Naive thymus-derived CD4-positive, alpha-beta T cell (primary cell): ENCODE measurements at regions of chr5 and their contacts with region 1.

Region 1: GRCh38 chr5:68287976-68288706 is 72.6 kb downstream of the PIK3R1 start:
- DNase-seq: peak; percentile 19 to 55 (median 49)
- ATAC-seq: peak; percentile 76
- H3K4me3 ChIP-seq: peak overlapping the region; percentile 65
- H3K4me3 Mint-ChIP-seq: peak overlapping the region; percentile 81 to 93 (median 90)
- H3K27ac ChIP-seq: peak overlapping the region; percentile 55
- H3K27ac Mint-ChIP-seq: peak overlapping the region; percentile 75 to 97 (median 92)
- H3K4me1 ChIP-seq: peaks cover 64 to 79% of the 10 kb centered on the region in 2 donors
- H3K4me1 Mint-ChIP-seq: peaks cover 49 to 96% (median 90%) of the 10 kb centered on the region in 7 donors
- H3K27me3 ChIP-seq: no peaks in the 10 kb centered on the region
- H3K27me3 Mint-ChIP-seq: no peaks in the 10 kb centered on the region

Region 2: DNA sequence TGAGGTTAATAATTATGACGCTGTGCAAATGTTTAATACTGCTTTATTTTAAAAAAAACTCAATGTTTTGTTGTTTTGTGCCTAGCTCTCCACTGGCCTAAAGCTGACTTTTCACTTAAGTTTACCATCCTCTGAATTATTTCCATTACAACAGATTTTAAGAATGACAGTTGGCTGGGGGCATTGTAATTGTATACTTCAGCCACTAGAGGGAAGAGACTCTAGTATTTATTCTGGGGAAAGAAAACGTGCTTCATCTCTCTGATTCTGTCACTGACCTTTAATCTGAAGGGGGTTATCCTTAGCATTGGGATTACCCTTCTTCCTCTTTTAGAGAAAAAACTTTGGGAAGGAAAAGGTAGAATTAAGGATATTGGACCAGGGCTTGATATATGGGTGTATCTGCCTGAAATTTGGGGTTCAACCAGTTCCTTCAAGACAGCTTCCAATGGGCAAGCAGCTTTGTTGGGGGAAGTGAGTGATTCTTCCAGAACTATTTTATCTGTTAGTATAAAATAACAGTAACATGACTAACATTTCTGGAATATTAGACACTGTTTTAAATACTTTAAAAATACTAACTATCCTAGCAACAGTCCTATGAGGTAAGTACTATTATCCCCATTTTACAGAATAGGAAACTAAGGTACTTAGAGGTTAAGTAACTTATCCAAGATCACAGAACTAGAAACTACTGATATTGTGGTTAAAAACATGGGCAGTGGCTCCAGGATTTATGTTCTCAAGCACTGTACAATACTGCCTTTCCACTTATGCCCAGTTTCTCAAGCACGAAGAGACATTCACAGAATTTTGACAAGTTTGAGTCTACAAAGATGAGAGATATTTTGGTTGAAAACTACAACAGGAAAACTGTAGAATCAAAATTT is 1299.9 kb before region 1 on chr5:
- CTCF ChIA-PET with region 1: no interaction called
- POLR2A ChIA-PET with region 1: no interaction called
- intact Hi-C with region 1: no loop called
- DNase-seq: peak in 6 of 9 donors; percentile 15 to 52 (median 40)
- ATAC-seq: peak; percentile 80
- H3K4me3 ChIP-seq: no peak overlapping the region
- H3K4me3 Mint-ChIP-seq: no peak overlapping the region
- H3K27ac ChIP-seq: no peak overlapping the region
- H3K27ac Mint-ChIP-seq: no peak overlapping the region
- H3K4me1 ChIP-seq: no peaks in the 10 kb centered on the region
- H3K4me1 Mint-ChIP-seq: peaks cover 0 to 17% (median 5%) of the 10 kb centered on the region in 7 donors
- H3K27me3 ChIP-seq: no peaks in the 10 kb centered on the region
- H3K27me3 Mint-ChIP-seq: peaks cover 0 to 11% (median 0%) of the 10 kb centered on the region in 5 donors

Region 3: DNA sequence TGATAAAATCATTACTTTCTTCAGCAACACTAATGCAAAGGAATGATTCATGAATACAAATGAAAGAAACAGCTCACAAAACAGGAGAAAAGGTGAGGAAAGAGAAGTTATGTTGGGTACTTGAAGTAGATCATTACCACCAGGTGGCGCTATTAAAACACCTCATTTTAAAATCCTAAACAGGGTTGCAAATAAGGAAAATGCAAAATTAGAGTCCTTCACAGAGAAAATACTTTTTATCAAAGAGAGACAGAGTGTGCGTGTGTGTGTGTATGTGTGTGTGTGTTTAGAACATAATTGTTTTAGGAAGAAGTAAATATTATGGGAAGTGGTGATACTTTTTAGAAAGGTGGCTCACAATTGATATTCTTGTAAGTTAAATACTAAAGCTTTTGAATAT is 1042.0 kb before region 1 on chr5:
- CTCF ChIA-PET with region 1: interaction called, 7 read pairs
- POLR2A ChIA-PET with region 1: no interaction called
- intact Hi-C with region 1: loop called in 1 of 2 experiments (anchors 2 kb)
- DNase-seq: peak in 7 of 9 donors; percentile 43 to 70 (median 64)
- ATAC-seq: peak; percentile 57
- H3K4me3 ChIP-seq: no peak overlapping the region
- H3K4me3 Mint-ChIP-seq: no peak overlapping the region
- H3K27ac ChIP-seq: no peak overlapping the region
- H3K27ac Mint-ChIP-seq: no peak overlapping the region
- H3K4me1 ChIP-seq: peaks cover 5 to 8% of the 10 kb centered on the region in 2 donors
- H3K4me1 Mint-ChIP-seq: peaks cover 2 to 22% (median 19%) of the 10 kb centered on the region in 7 donors
- H3K27me3 ChIP-seq: no peaks in the 10 kb centered on the region
- H3K27me3 Mint-ChIP-seq: peaks cover 0 to under 1% (median 0%) of the 10 kb centered on the region in 5 donors

Region 4: GRCh38 chr5:68086857-68087256 is 201.3 kb before region 1 on chr5:
- CTCF ChIA-PET with region 1: no interaction called
- POLR2A ChIA-PET with region 1: no interaction called
- intact Hi-C with region 1: no loop called
- DNase-seq: no peak
- ATAC-seq: no peak
- H3K4me3 ChIP-seq: no peak overlapping the region
- H3K4me3 Mint-ChIP-seq: no peak overlapping the region
- H3K27ac ChIP-seq: no peak overlapping the region
- H3K27ac Mint-ChIP-seq: no peak overlapping the region
- H3K4me1 ChIP-seq: no peaks in the 10 kb centered on the region
- H3K4me1 Mint-ChIP-seq: no peaks in the 10 kb centered on the region
- H3K27me3 ChIP-seq: no peaks in the 10 kb centered on the region
- H3K27me3 Mint-ChIP-seq: peaks cover 0 to 5% (median 3%) of the 10 kb centered on the region in 5 donors

Region 5: DNA sequence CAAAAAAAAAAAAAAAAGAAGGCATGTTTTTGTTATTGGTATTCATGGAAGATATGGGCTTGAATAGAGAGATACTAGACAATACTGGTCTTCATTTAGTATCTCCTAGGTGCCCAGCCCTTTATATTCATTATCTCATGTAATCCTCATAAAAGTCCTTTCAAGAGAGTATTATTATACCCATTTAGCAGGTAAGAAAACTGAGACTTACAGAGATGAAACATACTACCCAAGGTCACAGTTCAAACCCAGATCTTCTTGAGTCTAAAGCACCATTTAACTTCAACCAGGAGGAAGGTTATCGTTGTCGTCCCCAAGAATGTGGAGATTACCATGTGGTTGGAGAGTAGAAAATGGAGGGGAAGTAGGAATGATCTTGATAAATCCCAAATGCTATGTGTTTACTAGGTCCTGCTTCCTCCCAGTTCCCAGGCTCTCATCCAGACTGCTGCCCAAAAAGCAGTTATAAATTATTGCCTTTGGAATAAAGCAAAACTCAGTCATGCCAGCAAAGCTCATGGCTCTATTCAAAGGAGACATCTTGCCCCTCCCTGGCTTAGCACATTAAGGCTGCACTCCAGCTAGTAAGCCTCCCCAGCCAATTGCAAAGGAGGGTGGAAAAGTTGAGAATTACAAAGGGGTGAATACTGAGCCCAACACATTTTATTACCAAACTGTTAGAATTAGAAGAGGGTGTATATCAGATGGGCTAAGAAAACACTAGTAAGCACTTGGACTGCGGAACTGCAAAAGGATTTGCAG is 91.3 kb after region 1 on chr5:
- CTCF ChIA-PET with region 1: no interaction called
- POLR2A ChIA-PET with region 1: no interaction called
- intact Hi-C with region 1: loop called in 1 of 2 experiments (anchors 5 kb)
- DNase-seq: no peak
- ATAC-seq: no peak
- H3K4me3 ChIP-seq: no peak overlapping the region
- H3K4me3 Mint-ChIP-seq: no peak overlapping the region
- H3K27ac ChIP-seq: no peak overlapping the region
- H3K27ac Mint-ChIP-seq: peak overlapping the region in 1 of 9 donors; percentile 67
- H3K4me1 ChIP-seq: peaks cover 0 to 18% of the 10 kb centered on the region in 2 donors
- H3K4me1 Mint-ChIP-seq: peaks cover 0 to 84% (median 13%) of the 10 kb centered on the region in 7 donors
- H3K27me3 ChIP-seq: no peaks in the 10 kb centered on the region
- H3K27me3 Mint-ChIP-seq: peaks cover 0 to 9% (median 0%) of the 10 kb centered on the region in 5 donors

Region 6: DNA sequence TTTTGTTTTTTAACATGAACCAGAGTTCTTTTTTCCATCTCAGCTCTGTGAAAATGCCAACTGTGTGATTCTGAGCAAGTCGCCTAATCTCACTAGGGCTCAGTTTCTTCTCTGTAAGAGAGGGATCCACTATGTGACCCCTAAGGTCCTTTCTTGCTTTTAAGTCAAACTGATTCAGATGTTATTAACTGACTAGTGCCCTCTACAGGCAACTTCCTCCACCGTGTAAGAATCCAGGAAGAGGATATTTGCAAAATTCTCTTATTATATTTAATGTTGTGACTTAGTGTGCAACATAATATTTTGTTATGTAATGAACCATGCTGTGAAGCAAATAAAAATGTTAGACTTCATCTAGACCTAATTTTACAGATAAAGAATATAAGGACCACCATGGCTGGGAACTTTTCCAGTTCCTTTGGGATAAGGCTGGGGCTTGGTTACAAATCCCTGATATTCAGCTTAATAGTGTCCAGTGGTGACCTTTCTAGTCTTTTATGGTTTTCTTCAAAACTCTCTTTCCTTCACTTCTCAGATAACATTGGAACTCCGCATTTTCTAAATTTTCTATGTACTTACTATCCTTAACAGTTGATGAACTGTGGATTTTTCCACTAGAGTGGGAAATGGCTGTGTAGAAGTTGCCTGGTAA is 172.1 kb after region 1 on chr5:
- CTCF ChIA-PET with region 1: interaction called, 31 read pairs
- POLR2A ChIA-PET with region 1: no interaction called
- intact Hi-C with region 1: loop called (anchors 1 kb)
- DNase-seq: peak in 7 of 9 donors; percentile 29 to 59 (median 44)
- ATAC-seq: peak; percentile 77
- H3K4me3 ChIP-seq: no peak overlapping the region
- H3K4me3 Mint-ChIP-seq: no peak overlapping the region
- H3K27ac ChIP-seq: no peak overlapping the region
- H3K27ac Mint-ChIP-seq: peak overlapping the region in 1 of 9 donors; percentile 20
- H3K4me1 ChIP-seq: peaks cover 0 to 13% of the 10 kb centered on the region in 2 donors
- H3K4me1 Mint-ChIP-seq: peaks cover 4 to 21% (median 13%) of the 10 kb centered on the region in 7 donors
- H3K27me3 ChIP-seq: no peaks in the 10 kb centered on the region
- H3K27me3 Mint-ChIP-seq: peaks cover 0 to under 1% (median 0%) of the 10 kb centered on the region in 5 donors

Region 7: GRCh38 chr5:68576805-68577204 is 288.7 kb after region 1 on chr5:
- CTCF ChIA-PET with region 1: no interaction called
- POLR2A ChIA-PET with region 1: no interaction called
- intact Hi-C with region 1: no loop called
- DNase-seq: no peak
- ATAC-seq: no peak
- H3K4me3 ChIP-seq: no peak overlapping the region
- H3K4me3 Mint-ChIP-seq: no peak overlapping the region
- H3K27ac ChIP-seq: no peak overlapping the region
- H3K27ac Mint-ChIP-seq: no peak overlapping the region
- H3K4me1 ChIP-seq: no peaks in the 10 kb centered on the region
- H3K4me1 Mint-ChIP-seq: no peaks in the 10 kb centered on the region
- H3K27me3 ChIP-seq: no peaks in the 10 kb centered on the region
- H3K27me3 Mint-ChIP-seq: peaks cover 3 to 25% (median 14%) of the 10 kb centered on the region in 5 donors

Region 8: DNA sequence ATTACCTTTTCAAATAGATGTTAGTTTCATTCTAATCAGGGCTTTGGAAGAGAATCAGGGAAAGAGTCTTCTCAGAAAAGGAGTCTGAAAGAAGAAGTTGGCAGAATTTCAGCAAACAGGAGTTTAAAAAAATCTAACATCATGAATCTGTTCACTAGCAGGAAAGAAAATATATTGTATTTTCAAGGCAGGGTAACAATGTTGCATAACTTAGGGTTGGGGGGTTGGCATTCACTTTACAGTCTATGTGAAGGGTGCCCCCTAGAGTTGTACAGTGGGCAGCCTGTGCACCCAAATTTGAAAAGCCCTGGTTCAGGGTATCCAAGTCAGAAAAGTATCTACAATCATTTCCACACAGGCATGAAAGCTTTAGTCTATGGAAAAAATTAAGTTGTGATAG is 457.3 kb after region 1 on chr5:
- CTCF ChIA-PET with region 1: interaction called, 3 read pairs
- POLR2A ChIA-PET with region 1: no interaction called
- intact Hi-C with region 1: loop called in 1 of 2 experiments (anchors 1 kb)
- DNase-seq: peak in 2 of 9 donors; percentile 2
- ATAC-seq: no peak
- H3K4me3 ChIP-seq: no peak overlapping the region
- H3K4me3 Mint-ChIP-seq: no peak overlapping the region
- H3K27ac ChIP-seq: no peak overlapping the region
- H3K27ac Mint-ChIP-seq: no peak overlapping the region
- H3K4me1 ChIP-seq: no peaks in the 10 kb centered on the region
- H3K4me1 Mint-ChIP-seq: peaks cover 0 to 4% (median 3%) of the 10 kb centered on the region in 7 donors
- H3K27me3 ChIP-seq: no peaks in the 10 kb centered on the region
- H3K27me3 Mint-ChIP-seq: peaks cover 0 to 9% (median 4%) of the 10 kb centered on the region in 5 donors

Region 9: GRCh38 chr5:68891718-68892117 is 603.6 kb after region 1 on chr5:
- CTCF ChIA-PET with region 1: interaction called, 3 read pairs
- POLR2A ChIA-PET with region 1: no interaction called
- intact Hi-C with region 1: loop called in 1 of 2 experiments (anchors 5 kb)
- DNase-seq: peak in 4 of 9 donors; percentile 3 to 32 (median 27)
- ATAC-seq: peak; percentile 48
- H3K4me3 ChIP-seq: no peak overlapping the region
- H3K4me3 Mint-ChIP-seq: peak overlapping the region in 1 of 10 donors; percentile 39
- H3K27ac ChIP-seq: no peak overlapping the region
- H3K27ac Mint-ChIP-seq: peak overlapping the region in 1 of 9 donors; percentile 73
- H3K4me1 ChIP-seq: no peaks in the 10 kb centered on the region
- H3K4me1 Mint-ChIP-seq: peaks cover 3 to 60% (median 32%) of the 10 kb centered on the region in 7 donors
- H3K27me3 ChIP-seq: no peaks in the 10 kb centered on the region
- H3K27me3 Mint-ChIP-seq: no peaks in the 10 kb centered on the region

Region 10: GRCh38 chr5:69007726-69008368 is 719.7 kb after region 1 on chr5:
- CTCF ChIA-PET with region 1: interaction called, 5 read pairs
- POLR2A ChIA-PET with region 1: no interaction called
- intact Hi-C with region 1: loop called (anchors 1 kb)
- DNase-seq: peak; percentile 24 to 69 (median 62)
- ATAC-seq: peak; percentile 88
- H3K4me3 ChIP-seq: no peak overlapping the region
- H3K4me3 Mint-ChIP-seq: no peak overlapping the region
- H3K27ac ChIP-seq: no peak overlapping the region
- H3K27ac Mint-ChIP-seq: no peak overlapping the region
- H3K4me1 ChIP-seq: no peaks in the 10 kb centered on the region
- H3K4me1 Mint-ChIP-seq: no peaks in the 10 kb centered on the region
- H3K27me3 ChIP-seq: no peaks in the 10 kb centered on the region
- H3K27me3 Mint-ChIP-seq: peaks cover 14 to 51% (median 29%) of the 10 kb centered on the region in 5 donors